ENCODE measurements at regions of chr1 and their contacts with region 1.

Region 1: DNA sequence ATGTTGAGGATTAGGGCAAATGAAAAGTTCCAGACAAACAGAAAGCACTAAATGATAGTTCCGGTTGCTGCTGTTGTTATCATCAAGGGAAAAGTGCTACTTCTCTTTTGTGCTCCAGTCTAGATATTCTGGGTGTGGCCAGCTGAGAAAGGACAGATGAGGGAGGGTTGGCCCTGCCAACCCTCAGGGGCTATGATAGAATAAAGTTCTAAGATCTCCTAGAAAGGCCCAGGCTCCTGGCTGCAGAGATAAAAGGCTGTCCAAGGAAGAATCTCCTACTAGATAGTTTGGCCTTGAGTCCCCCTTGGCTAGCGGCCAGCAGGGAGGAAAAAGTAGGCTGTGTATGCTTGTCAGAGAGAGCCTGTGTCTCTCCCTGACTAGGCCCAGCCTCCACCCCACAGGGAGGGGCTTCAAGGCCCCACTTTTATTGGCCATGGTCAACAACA is 31.5 kb downstream of the RIMS3 start:
- H3K4me3 ChIP-seq: no peak overlapping the region
- H3K27ac ChIP-seq: no peak overlapping the region
- H3K4me1 ChIP-seq: no peaks in the 10 kb centered on the region
- CTCF ChIP-seq: no peak

Region 2: GRCh38 chr1:40563266-40563665 is 70.7 kb before region 1 on chr1:
- CTCF ChIA-PET with region 1: no interaction called
- POLR2A ChIA-PET with region 1: no interaction called
- H3K4me3 ChIP-seq: no peak overlapping the region
- H3K27ac ChIP-seq: no peak overlapping the region
- H3K4me1 ChIP-seq: no peaks in the 10 kb centered on the region
- CTCF ChIP-seq: no peak

Region 3: GRCh38 chr1:40668769-40669525 is 35.0 kb after region 1 on chr1:
- CTCF ChIA-PET with region 1: interaction called, 12 read pairs
- POLR2A ChIA-PET with region 1: no interaction called
- H3K4me3 ChIP-seq: peak overlapping the region; percentile 27
- H3K27ac ChIP-seq: no peak overlapping the region
- H3K4me1 ChIP-seq: no peaks in the 10 kb centered on the region
- CTCF ChIP-seq: peak; percentile 54